OCI-LY7 (cell line): ENCODE measurements at regions of chr15 and their contacts with region 1.

Region 1: DNA sequence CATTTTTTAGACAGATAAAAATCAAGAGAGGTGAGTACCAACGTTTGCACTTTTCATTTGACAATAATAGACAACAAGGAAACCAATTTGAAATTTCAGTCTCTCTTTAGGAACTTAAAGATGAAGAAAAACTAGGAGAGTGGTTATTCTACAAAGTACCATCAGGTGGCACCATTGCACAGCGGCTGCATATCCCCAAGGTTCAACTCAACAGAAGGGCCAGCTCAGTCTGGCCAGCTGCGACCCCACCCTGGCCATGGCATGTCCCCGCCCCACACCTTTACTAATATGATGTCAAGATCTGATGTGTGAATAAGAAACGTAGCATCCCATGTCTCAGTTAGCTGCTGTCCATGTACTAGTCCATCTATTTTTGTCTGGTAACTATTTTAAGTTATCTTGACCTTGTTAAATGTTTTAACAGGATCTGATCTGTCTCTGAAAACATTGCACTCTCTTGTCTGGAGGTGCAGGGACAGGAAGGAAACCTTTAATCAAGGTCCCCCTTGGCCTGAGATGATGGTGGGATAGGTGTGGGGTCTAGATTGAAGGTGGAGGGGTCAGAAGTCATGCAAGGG is 35.5 kb upstream of the CGNL1 start:
- DNase-seq: peak; percentile 56
- H3K4me3 ChIP-seq: no peak overlapping the region
- H3K27ac ChIP-seq: no peak overlapping the region
- H3K4me1 ChIP-seq: no peaks in the 10 kb centered on the region
- CTCF ChIP-seq: peak; percentile 94

Region 2: DNA sequence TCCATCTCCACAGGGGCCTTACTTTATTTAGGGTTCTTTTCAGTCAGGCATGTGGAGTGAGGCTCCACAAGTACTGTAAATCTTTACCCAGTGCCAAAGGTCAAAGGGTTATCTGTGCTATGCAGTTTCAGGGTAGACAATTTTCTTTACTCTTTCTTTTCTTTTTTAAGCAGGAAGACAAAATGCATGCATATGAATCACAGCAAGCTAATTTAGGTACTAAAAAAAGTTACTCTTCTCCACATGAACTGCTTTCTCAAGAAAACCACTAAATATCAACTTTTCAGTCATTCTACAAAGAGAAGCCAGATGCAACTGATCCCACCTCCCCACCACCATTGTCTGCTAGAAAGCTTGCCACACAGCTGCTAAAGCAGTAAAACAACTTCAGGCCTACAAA is 1679.3 kb before region 1 on chr15:
- CTCF ChIA-PET with region 1: no interaction called
- POLR2A ChIA-PET with region 1: no interaction called
- intact Hi-C with region 1: no loop called
- DNase-seq: no peak
- H3K4me3 ChIP-seq: no peak overlapping the region
- H3K27ac ChIP-seq: no peak overlapping the region
- H3K4me1 ChIP-seq: no peaks in the 10 kb centered on the region
- CTCF ChIP-seq: no peak

Region 3: GRCh38 chr15:57527382-57528091 is 186.8 kb after region 1 on chr15:
- CTCF ChIA-PET with region 1: interaction called, 12 read pairs
- POLR2A ChIA-PET with region 1: no interaction called
- intact Hi-C with region 1: loop called (anchors 1 kb)
- DNase-seq: peak; percentile 86
- H3K4me3 ChIP-seq: no peak overlapping the region
- H3K27ac ChIP-seq: no peak overlapping the region
- H3K4me1 ChIP-seq: no peaks in the 10 kb centered on the region
- CTCF ChIP-seq: peak; percentile 79

Region 4: GRCh38 chr15:57541805-57542504 is 201.2 kb after region 1 on chr15:
- CTCF ChIA-PET with region 1: no interaction called
- POLR2A ChIA-PET with region 1: no interaction called
- intact Hi-C with region 1: loop called (anchors 5 kb)
- DNase-seq: peak; percentile 42
- H3K4me3 ChIP-seq: no peak overlapping the region
- H3K27ac ChIP-seq: no peak overlapping the region
- H3K4me1 ChIP-seq: no peaks in the 10 kb centered on the region
- CTCF ChIP-seq: peak; percentile 84